GM12878 (cell line): ENCODE measurements at regions of chr12 and their contacts with region 1.

Region 1: DNA sequence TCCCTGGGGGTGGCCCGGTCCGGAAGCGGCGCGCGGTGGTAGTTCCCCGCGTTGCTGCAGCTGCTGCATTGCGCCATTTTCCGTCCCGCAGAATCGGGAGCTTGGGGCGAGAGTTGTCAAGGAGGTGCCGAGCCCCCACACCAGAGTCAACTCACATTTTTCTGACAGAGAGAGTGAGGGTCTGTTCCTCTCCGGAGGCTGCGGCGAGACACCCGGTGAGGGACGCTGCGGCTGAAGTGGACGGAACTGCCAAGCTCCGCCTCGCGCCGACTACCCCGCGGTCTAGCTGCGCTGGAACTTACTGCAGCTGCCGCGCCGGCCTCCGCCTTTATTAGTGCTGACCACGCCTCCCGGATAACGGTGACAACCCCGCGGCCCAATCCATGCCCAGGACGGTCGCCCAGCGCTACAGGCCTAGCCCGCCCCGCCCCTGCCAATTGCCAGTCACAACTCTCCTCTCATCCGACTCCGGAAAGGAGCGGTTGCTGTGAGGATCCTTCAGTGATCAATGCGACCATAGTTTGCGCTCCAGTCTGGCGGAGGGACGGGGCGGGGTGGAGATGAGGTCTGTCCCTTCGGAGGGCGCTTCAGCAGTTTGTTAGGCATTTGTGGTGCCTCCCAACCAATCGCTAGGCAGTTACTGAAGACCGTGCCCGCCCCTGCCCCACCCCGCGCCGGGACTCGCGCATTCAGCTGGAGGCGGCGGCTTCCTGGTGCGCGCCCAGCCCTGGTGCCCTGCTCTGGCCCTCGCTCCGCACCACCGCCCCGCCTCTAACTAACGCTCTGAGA is at the start of gene VAMP1:
- DNase-seq: peak; percentile 92
- ATAC-seq: peak; percentile 96
- H3K4me3 ChIP-seq: peak within 1 kb of the TSS; percentile 99
- H3K27ac ChIP-seq: peak within 1 kb of the TSS; percentile 63
- H3K4me1 ChIP-seq: peaks cover 18% of the 10 kb centered on the region
- H3K27me3 ChIP-seq: no peaks in the 10 kb centered on the region
- CTCF ChIP-seq: no peak
- EP300 ChIP-seq: no peak
- POLR2A ChIP-seq: peak; percentile 100
- RAD21 ChIP-seq: no peak
- polyA plus RNA-seq, gene VAMP1: 4.8 to 8.8 TPM

Region 2: GRCh38 chr12:6330192-6330591 is 140.4 kb before region 1 on chr12:
- CTCF ChIA-PET with region 1: interaction called, 43 read pairs
- POLR2A ChIA-PET with region 1: interaction called, 22 read pairs
- RAD21 ChIA-PET with region 1: interaction called, 44 read pairs
- SMC1A ChIA-PET with region 1: interaction called, 39 read pairs
- in situ Hi-C with region 1: loop called (anchors 5 kb)
- intact Hi-C with region 1: no loop called
- DNase-seq: peak; percentile 68
- ATAC-seq: peak; percentile 95
- H3K4me3 ChIP-seq: no peak overlapping the region
- H3K27ac ChIP-seq: peak overlapping the region; percentile 55
- H3K4me1 ChIP-seq: peaks cover 21% of the 10 kb centered on the region
- H3K27me3 ChIP-seq: no peaks in the 10 kb centered on the region
- CTCF ChIP-seq: no peak
- EP300 ChIP-seq: no peak
- POLR2A ChIP-seq: no peak
- RAD21 ChIP-seq: no peak

Region 3: GRCh38 chr12:6423267-6424007 is 47.1 kb before region 1 on chr12:
- CTCF ChIA-PET with region 1: interaction called, 240 read pairs
- POLR2A ChIA-PET with region 1: interaction called, 134 read pairs
- RAD21 ChIA-PET with region 1: interaction called, 151 read pairs
- SMC1A ChIA-PET with region 1: interaction called, 211 read pairs
- in situ Hi-C with region 1: no loop called
- intact Hi-C with region 1: loop called (anchors 1 kb)
- DNase-seq: no peak
- ATAC-seq: peak; percentile 70
- H3K4me3 ChIP-seq: no peak overlapping the region
- H3K27ac ChIP-seq: peak overlapping the region; percentile 61
- H3K4me1 ChIP-seq: peaks cover 44% of the 10 kb centered on the region
- H3K27me3 ChIP-seq: no peaks in the 10 kb centered on the region; a peak in 1 of 4 replicates
- CTCF ChIP-seq: peak; percentile 80 to 95 (median 87); a peak in 5 of 6 replicates
- EP300 ChIP-seq: peak in 1 of 2 experiments; percentile 31; a peak in 1 of 4 replicates
- POLR2A ChIP-seq: no peak
- RAD21 ChIP-seq: peak; percentile 97

Region 4: DNA sequence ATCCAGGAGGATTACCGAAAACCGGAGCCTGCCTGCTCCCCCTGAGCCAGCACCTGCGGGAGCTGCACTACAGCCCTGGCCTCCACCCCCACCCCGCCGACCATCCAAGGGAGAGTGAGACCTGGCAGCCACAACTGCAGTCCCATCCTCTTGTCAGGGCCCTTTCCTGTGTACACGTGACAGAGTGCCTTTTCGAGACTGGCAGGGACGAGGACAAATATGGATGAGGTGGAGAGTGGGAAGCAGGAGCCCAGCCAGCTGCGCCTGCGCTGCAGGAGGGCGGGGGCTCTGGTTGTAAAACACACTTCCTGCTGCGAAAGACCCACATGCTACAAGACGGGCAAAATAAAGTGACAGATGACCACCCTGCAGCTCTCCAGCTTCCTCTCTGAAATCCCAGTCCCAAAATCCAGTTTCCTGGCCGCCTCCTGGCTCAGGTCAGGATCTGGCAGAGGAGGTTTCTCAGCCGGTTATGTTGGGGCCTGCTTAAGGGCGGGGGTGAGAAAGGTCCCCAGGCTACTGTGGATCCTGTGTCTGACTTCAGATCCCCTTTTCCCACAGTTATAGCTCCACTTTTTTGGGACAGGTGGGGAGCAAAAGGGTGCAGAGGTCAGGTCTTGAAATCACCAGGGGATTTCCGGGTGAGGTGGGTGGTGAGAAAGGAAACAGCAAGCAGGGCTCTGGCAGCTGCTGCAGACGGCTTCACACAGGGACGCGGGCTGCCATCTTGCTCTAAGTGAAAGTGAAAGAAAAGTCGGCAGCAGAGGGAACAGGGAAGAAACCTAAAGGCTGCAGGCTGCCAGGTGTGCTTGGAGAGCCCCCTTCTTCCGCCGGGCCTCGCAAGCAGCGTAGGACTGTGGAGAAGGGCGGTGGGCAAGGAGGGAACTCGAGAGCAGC is 19.0 kb before region 1 on chr12 and contains the start of gene TAPBPL:
- CTCF ChIA-PET with region 1: interaction called, 79 read pairs
- POLR2A ChIA-PET with region 1: interaction called, 384 read pairs
- RAD21 ChIA-PET with region 1: interaction called, 319 read pairs
- SMC1A ChIA-PET with region 1: interaction called, 26 read pairs
- in situ Hi-C with region 1: no loop called
- intact Hi-C with region 1: loop called (anchors 2 kb)
- DNase-seq: peak; percentile 75
- ATAC-seq: peak; percentile 84
- H3K4me3 ChIP-seq: peak within 1 kb of the TSS; percentile 83
- H3K27ac ChIP-seq: peak within 1 kb of the TSS; percentile 98
- H3K4me1 ChIP-seq: peaks cover 38% of the 10 kb centered on the region
- H3K27me3 ChIP-seq: no peaks in the 10 kb centered on the region
- CTCF ChIP-seq: no peak
- EP300 ChIP-seq: peak; percentile 18 to 46; a peak in 1 of 4 replicates
- POLR2A ChIP-seq: peak; percentile 82
- RAD21 ChIP-seq: no peak
- polyA plus RNA-seq, gene TAPBPL: 12.4 to 20.9 TPM

Region 5: DNA sequence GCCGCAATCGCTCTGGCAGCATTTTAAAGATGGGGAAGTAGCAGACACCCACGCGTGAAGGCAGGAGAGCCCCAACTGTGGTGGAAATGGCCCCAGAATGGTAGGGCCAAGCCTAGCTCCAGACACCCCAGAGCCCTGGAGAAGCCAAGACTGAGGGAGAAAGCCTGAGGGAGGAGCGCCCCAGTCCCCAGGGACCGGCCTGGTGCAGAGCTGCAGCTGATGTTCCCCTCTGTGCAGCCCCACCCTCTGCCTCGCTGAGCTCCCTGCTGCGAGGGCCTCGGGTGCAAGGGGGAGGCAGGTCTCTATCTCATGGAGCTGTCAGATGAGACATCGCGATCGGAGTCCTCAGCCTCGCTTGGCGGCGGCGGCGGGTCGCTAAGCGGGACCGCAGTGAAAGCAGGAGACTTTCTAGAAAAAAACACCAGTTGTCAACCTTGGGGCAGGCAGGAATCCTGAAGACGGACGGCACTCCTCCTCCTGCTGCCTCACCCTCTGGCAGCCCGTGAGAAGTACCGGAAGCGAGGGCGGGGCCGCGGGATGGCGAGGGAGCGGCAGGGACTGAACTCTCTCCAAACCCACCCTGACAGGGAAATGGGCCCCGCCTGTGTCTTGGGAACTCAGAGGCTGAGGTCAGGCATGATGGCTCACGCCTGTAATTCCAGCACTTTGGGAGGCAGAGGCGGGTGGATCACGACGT is 69.8 kb after region 1 on chr12:
- CTCF ChIA-PET with region 1: interaction called, 73 read pairs
- POLR2A ChIA-PET with region 1: interaction called, 5 read pairs
- RAD21 ChIA-PET with region 1: interaction called, 40 read pairs
- SMC1A ChIA-PET with region 1: interaction called, 50 read pairs
- in situ Hi-C with region 1: no loop called
- intact Hi-C with region 1: loop called (anchors 5 kb)
- DNase-seq: no peak
- ATAC-seq: peak; percentile 60
- H3K4me3 ChIP-seq: peak overlapping the region; percentile 28
- H3K27ac ChIP-seq: peak overlapping the region; percentile 42
- H3K4me1 ChIP-seq: peaks cover 26% of the 10 kb centered on the region
- H3K27me3 ChIP-seq: no peaks in the 10 kb centered on the region
- CTCF ChIP-seq: peak in 1 of 3 experiments; percentile 35; a peak in 1 of 6 replicates
- EP300 ChIP-seq: no peak
- POLR2A ChIP-seq: no peak
- RAD21 ChIP-seq: no peak